ENCODE measurements at regions of chr20 and their contacts with region 1.

Region 1: DNA sequence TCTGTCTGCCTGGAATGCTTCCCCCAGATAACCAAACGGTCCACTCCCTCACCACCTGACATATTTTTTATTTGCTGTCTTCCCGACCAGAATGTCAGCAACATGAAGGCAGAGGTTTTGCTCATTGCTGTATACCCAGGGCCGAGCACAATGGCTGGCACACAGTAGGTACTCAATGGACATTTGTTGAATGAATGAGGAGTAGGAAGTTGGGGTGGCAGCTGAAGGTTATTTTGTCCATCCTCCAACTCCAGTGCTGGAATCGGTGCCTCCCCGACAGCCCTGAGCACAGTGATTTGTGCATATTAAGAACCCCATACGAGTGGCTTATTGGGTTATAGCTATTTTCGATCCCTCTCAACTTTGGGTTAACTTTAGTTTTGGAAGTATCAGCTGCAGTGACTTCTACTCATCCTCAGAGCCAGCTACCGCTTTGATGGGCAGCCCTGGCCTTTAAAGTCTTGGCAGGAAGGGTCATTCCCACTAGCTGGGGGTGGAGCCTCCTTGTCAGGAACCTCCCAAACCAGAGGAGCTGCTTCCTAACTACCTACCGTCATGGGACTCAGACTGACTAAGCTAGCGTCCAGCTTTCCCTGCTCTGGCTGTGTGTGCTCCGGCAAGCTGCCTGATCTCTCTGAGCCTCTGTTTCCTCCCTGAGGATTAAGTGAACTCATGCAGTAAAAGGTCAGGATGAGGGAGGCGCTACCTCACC is 10.2 kb downstream of the DUSP15 start:
- DNase-seq: no peak
- ATAC-seq: peak in 7 of 8 donors; percentile 31 to 71 (median 57)
- H3K4me3 ChIP-seq: peak overlapping the region in 6 of 10 donors; percentile 53 to 65 (median 60)
- H3K27ac ChIP-seq: no peak overlapping the region
- H3K4me1 ChIP-seq: peaks cover 9 to 22% (median 17%) of the 10 kb centered on the region in 9 donors
- H3K27me3 ChIP-seq: peaks cover 0 to 48% (median 17%) of the 10 kb centered on the region in 7 donors
- CTCF ChIP-seq: no peak

Region 2: DNA sequence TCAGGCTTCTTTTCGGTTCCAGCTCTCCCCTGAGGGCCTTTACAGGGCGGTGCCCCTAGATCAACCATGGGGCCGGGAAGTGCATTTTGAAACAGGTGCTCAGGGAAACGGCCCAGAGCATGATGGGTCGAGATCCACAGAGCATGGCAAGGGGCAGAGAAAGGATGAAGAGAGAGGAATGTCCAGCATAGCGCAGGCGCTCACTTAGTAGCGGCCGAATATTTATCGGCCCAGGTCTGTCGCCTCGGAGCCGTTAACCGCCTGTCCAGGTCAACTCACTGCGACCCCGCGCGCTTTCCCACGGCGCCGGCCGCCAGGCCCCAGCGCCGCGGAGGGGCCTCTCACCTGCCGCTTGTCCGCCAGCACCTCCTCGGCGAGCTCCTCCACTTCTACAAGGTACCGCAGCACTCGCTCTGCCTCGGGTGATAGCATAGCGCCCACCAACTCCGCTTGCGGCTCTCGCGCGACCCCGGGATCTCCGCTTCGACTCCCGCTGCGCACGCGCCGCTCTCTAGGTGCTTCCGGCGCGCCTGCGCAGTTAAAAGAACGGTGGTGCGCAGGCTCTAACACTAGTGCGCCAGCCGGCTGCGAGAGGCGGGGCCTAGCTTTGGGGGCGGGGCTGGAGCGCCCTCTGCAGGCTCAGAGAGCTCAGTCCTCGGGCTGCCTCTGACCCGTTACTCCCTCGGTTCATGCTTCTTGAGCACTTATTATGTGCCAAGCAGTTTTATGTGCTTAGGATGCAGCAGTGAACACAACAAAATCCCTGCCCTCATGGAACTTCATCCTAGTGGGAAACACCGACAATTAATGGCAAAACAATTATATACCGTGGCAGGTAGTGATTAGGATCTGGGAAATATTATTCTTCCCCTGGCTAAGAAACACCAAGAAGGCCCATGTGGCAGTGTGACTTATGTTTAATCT is 91.6 kb after region 1 on chr20 and contains the start of gene PDRG1:
- intact Hi-C with region 1: loop called in 2 of 10 experiments (anchors 5 kb)
- DNase-seq: peak; percentile 94 to 97
- ATAC-seq: peak; percentile 97 to 99 (median 99)
- H3K4me3 ChIP-seq: peak within 1 kb of the TSS; percentile 67 to 98 (median 90)
- H3K27ac ChIP-seq: peak within 1 kb of the TSS in 9 of 10 donors; percentile 50 to 90 (median 86)
- H3K4me1 ChIP-seq: peaks cover 8 to 18% (median 15%) of the 10 kb centered on the region in 9 donors
- H3K27me3 ChIP-seq: peaks cover 0 to 11% (median 0%) of the 10 kb centered on the region in 7 donors
- CTCF ChIP-seq: peak; percentile 80 to 99 (median 96)
- total RNA-seq, gene PDRG1: 6.4 to 10.7 (median 7.5) TPM

Region 3: DNA sequence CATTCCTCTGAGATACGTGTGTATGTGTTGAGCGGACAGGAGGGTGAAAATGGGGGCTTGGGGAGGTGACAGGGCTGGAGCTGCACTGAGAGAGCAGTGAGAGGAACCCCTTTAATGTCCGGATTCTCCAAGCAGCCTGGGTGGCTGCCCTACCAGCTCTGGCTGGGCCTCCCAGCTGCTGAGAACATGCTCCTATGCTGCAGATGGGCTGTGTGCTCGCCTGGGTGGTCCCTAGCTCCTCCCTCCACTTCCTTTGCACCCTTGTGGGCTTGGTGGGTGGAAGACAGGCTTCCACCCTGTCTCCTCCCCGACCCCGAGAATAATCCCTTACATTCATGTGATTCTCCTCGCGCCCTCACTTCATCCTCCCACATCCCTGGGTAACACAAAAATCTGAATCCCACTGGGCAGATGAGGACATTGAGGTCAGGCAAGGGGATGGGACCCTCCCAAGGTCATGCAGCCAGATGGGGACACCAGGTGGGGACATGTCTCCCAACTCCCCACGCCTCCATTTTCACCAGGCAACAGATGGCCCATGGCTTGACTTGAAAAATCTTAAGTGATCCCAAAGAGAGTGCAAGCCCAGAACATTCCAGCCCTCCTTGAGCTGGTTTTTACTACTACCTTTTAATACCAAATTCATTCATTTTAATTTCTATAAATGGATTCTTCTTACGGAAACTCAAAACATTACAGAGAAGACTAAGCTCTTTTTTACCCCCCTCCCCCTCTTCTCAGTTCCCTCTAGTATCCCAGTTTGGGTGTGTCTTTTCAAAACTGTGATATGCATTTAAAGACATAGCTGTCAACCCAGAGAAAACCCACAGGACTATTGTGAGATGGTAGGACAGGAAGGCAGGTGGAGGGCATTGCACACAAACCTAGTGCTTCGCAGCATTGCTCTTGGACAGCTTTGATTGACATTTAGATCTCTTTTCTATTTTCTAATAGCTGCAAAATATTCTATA is 96.7 kb after region 1 on chr20:
- intact Hi-C with region 1: loop called in 2 of 10 experiments (anchors 5 kb)
- DNase-seq: no peak
- ATAC-seq: no peak
- H3K4me3 ChIP-seq: no peak overlapping the region
- H3K27ac ChIP-seq: no peak overlapping the region
- H3K4me1 ChIP-seq: peaks cover 0 to 3% (median 0%) of the 10 kb centered on the region in 9 donors
- H3K27me3 ChIP-seq: peaks cover 0 to 12% (median 9%) of the 10 kb centered on the region in 7 donors
- CTCF ChIP-seq: no peak

Region 4: GRCh38 chr20:32091888-32092346 is 231.8 kb after region 1 on chr20:
- intact Hi-C with region 1: loop called in 4 of 10 experiments (anchors 10 kb)
- DNase-seq: peak; percentile 66 to 68
- ATAC-seq: peak in 6 of 8 donors; percentile 28 to 85 (median 76)
- H3K4me3 ChIP-seq: no peak overlapping the region
- H3K27ac ChIP-seq: no peak overlapping the region
- H3K4me1 ChIP-seq: peaks cover 0 to 6% (median 0%) of the 10 kb centered on the region in 9 donors
- H3K27me3 ChIP-seq: peaks cover 0 to 10% (median 0%) of the 10 kb centered on the region in 7 donors
- CTCF ChIP-seq: peak; percentile 76 to 98 (median 92)

Measured in heart right ventricle (tissue), 16 donors.